WTC11 (cell line): ENCODE measurements at regions of chr4 and their contacts with region 1.

Region 1: GRCh38 chr4:15649914-15650545 is 5.1 kb downstream of the FBXL5 start:
- DNase-seq: peak; percentile 37
- ATAC-seq: peak; percentile 76
- H3K4me3 Mint-ChIP-seq: 0 out of 2 replicates have a peak overlapping the region, but pooled peaks have one; percentile 29
- H3K27ac Mint-ChIP-seq: peak overlapping the region; percentile 96
- H3K4me1 Mint-ChIP-seq: peaks cover 40% of the 10 kb centered on the region
- H3K27me3 Mint-ChIP-seq: no peaks in the 10 kb centered on the region
- CTCF ChIP-seq: 0 out of 2 replicates have a peak, but pooled peaks have one; percentile 36

Region 2: GRCh38 chr4:14877246-14878225 is 772.5 kb before region 1 on chr4:
- CTCF ChIA-PET with region 1: no interaction called
- POLR2A ChIA-PET with region 1: no interaction called
- DNase-seq: no peak
- ATAC-seq: peak; percentile 44
- H3K4me3 Mint-ChIP-seq: no peak overlapping the region
- H3K27ac Mint-ChIP-seq: no peak overlapping the region
- H3K4me1 Mint-ChIP-seq: peaks cover 10% of the 10 kb centered on the region
- H3K27me3 Mint-ChIP-seq: peaks cover 23% of the 10 kb centered on the region
- CTCF ChIP-seq: no peak

Region 3: GRCh38 chr4:15479089-15479912 is 170.7 kb before region 1 on chr4:
- CTCF ChIA-PET with region 1: interaction called, 27 read pairs
- POLR2A ChIA-PET with region 1: interaction called, 4 read pairs
- DNase-seq: peak; percentile 58
- ATAC-seq: peak; percentile 90
- H3K4me3 Mint-ChIP-seq: peak overlapping the region; percentile 82
- H3K27ac Mint-ChIP-seq: peak overlapping the region; percentile 95
- H3K4me1 Mint-ChIP-seq: peaks cover 13% of the 10 kb centered on the region
- H3K27me3 Mint-ChIP-seq: no peaks in the 10 kb centered on the region
- CTCF ChIP-seq: no peak; the same call in 1 of the 2 replicates

Region 4: DNA sequence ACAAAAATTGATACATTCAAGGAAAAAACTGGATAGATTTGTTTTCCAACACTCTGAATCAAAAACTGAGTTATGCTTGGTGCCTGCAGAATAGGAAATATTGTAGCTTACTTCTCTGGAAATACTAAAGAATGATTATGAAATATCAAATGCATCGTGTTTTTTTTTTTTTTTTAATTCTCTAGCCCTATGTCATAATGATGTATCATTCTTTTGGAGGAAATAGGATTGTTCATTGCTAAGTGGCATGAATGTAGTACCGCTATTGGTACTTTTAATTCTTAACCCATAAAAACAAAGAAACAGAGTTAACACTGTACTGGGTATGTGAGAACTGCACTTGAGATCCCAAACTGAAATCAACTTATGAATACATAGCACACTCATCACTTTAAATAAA is 24.0 kb after region 1 on chr4:
- CTCF ChIA-PET with region 1: no interaction called
- POLR2A ChIA-PET with region 1: no interaction called
- DNase-seq: no peak
- ATAC-seq: no peak
- H3K4me3 Mint-ChIP-seq: no peak overlapping the region
- H3K27ac Mint-ChIP-seq: no peak overlapping the region
- H3K4me1 Mint-ChIP-seq: peaks cover 27% of the 10 kb centered on the region
- H3K27me3 Mint-ChIP-seq: no peaks in the 10 kb centered on the region
- CTCF ChIP-seq: no peak